GM12878 (cell line): ENCODE measurements at regions of chr19 and their contacts with region 1.

Region 1: GRCh38 chr19:29212648-29213573 is at the start of gene UQCRFS1:
- DNase-seq: peak; percentile 77
- ATAC-seq: peak; percentile 98
- H3K4me3 ChIP-seq: peak within 1 kb of the TSS; percentile 76
- H3K27ac ChIP-seq: peak within 1 kb of the TSS; percentile 94
- H3K4me1 ChIP-seq: no peaks in the 10 kb centered on the region
- H3K27me3 ChIP-seq: no peaks in the 10 kb centered on the region
- CTCF ChIP-seq: no peak
- EP300 ChIP-seq: no peak
- POLR2A ChIP-seq: peak; percentile 91
- RAD21 ChIP-seq: no peak
- polyA plus RNA-seq, gene UQCRFS1: 9.3 to 41.9 TPM

Region 2: DNA sequence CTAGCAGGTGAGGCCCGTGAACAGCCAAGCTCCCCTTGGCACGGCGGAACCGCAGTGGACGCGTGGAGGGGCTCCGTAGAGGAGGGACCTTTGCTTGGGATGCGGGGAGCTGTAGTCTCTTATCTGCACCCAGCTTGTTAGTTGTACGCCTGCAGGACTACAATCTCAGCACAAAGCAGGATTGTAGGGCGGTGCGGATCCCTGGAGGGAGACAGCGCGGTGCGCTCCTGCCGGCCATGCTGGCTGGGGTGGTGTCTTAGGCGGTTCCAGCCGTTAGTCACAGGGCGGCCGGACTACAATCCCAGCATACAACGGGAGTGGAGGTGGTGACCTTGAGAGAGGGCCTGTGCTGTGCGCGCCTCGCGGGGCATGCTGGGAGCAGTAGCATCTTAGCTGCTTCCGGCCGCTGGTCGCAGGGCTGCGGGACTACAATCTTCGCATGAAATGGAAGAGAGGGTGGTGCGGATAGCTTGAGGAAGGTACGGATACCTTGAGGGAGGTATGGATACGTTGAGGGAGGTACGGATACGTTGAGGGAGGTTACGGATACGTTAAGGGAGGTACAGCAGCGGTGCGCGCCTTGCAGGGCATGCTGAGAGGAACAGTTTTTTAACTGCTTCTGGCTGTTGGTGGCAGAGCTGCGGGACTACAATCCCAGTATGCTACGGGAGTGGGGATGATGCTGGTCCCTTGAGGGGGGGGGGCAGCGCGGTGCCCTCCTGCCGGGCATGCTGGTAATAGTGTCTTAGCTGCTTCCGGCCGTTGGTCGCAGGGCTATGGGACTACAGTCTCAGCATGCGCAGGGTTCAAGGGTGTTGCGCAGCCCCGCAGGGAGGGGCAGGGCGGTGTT is 1419.0 kb before region 1 on chr19:
- CTCF ChIA-PET with region 1: no interaction called
- POLR2A ChIA-PET with region 1: no interaction called
- RAD21 ChIA-PET with region 1: no interaction called
- SMC1A ChIA-PET with region 1: no interaction called
- in situ Hi-C with region 1: loop called (anchors 25 kb)
- intact Hi-C with region 1: loop called (anchors 10 kb)
- DNase-seq: peak; percentile 71
- ATAC-seq: peak; percentile 96
- H3K4me3 ChIP-seq: peak overlapping the region; percentile 85
- H3K27ac ChIP-seq: peak overlapping the region; percentile 83
- H3K4me1 ChIP-seq: peaks cover 9% of the 10 kb centered on the region
- H3K27me3 ChIP-seq: no peaks in the 10 kb centered on the region
- CTCF ChIP-seq: no peak
- EP300 ChIP-seq: no peak
- POLR2A ChIP-seq: peak; percentile 86
- RAD21 ChIP-seq: no peak

Region 3: GRCh38 chr19:29239213-29239776 is 26.4 kb after region 1 on chr19:
- CTCF ChIA-PET with region 1: no interaction called
- POLR2A ChIA-PET with region 1: no interaction called
- RAD21 ChIA-PET with region 1: no interaction called
- SMC1A ChIA-PET with region 1: no interaction called
- in situ Hi-C with region 1: no loop called
- intact Hi-C with region 1: no loop called
- DNase-seq: no peak
- ATAC-seq: no peak
- H3K4me3 ChIP-seq: no peak overlapping the region
- H3K27ac ChIP-seq: no peak overlapping the region
- H3K4me1 ChIP-seq: no peaks in the 10 kb centered on the region
- H3K27me3 ChIP-seq: no peaks in the 10 kb centered on the region
- CTCF ChIP-seq: no peak
- EP300 ChIP-seq: no peak
- POLR2A ChIP-seq: no peak
- RAD21 ChIP-seq: no peak